T-cell (primary cell): ENCODE measurements at regions of chr12 and their contacts with region 1.

Region 1: DNA sequence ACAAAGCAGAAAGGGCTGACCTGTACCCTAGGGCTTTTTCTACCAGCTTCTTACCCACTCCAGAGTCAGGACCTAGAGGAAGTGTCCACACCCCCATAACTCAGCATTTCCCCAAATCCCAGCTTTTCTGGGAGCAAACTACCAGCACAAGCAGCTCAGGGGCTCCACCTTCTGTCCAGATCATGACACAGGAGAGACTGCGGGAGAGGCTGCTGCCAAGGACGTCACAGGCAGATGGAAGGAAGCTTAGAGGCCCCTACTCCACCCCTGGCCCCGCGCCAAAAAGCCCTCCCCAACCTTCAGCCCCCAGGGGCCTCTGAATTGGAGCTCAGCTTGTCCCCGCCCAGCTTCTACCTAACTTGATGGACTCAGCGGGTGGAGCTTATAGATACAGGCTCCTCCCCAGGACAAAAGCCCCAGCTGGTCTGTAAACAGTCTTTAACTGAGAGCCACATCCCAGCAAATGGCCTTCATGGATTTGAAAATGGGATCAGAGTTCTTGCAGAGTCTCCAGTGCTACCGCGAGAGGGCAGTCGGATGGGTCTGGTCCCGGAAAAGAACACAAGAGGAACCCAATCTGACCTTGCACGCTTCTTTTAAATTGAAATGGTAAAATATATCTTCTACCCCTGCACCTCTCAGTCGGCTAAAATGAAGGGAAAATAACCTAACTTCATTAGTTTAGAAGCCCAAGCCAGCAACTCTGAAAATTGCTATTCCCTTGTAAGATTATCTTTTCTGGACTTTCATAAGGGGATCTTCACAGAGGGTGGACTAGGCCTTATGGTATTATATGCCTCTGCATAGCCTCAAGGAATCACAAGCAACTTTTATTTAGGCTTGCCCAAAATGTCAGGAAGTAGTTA is 6.8 kb upstream of the BAZ2A start:
- DNase-seq: peak; percentile 73 to 99 (median 97)
- ATAC-seq: peak; percentile 62 to 79 (median 65)
- H3K4me3 ChIP-seq: peak overlapping the region; percentile 83 to 92
- H3K4me3 Mint-ChIP-seq: peak overlapping the region; percentile 89 to 100 (median 96)
- H3K27ac ChIP-seq: peak overlapping the region; percentile 90
- H3K27ac Mint-ChIP-seq: peak overlapping the region; percentile 94 to 98
- H3K4me1 ChIP-seq: peaks cover 32 to 55% of the 10 kb centered on the region in 2 experiments
- H3K4me1 Mint-ChIP-seq: peaks cover 48 to 55% (median 53%) of the 10 kb centered on the region in 3 donors
- H3K27me3 ChIP-seq: no peaks in the 10 kb centered on the region
- H3K27me3 Mint-ChIP-seq: no peaks in the 10 kb centered on the region

Region 2: GRCh38 chr12:56346703-56347102 is 290.2 kb before region 1 on chr12:
- CTCF ChIA-PET with region 1: no interaction called
- POLR2A ChIA-PET with region 1: no interaction called
- DNase-seq: peak in 2 of 35 experiments; percentile 21 to 30
- ATAC-seq: peak in 2 of 4 experiments; percentile 9 to 32
- H3K4me3 ChIP-seq: no peak overlapping the region
- H3K4me3 Mint-ChIP-seq: no peak overlapping the region
- H3K27ac ChIP-seq: no peak overlapping the region
- H3K27ac Mint-ChIP-seq: no peak overlapping the region
- H3K4me1 ChIP-seq: no peaks in the 10 kb centered on the region
- H3K4me1 Mint-ChIP-seq: no peaks in the 10 kb centered on the region
- H3K27me3 ChIP-seq: no peaks in the 10 kb centered on the region
- H3K27me3 Mint-ChIP-seq: no peaks in the 10 kb centered on the region

Region 3: DNA sequence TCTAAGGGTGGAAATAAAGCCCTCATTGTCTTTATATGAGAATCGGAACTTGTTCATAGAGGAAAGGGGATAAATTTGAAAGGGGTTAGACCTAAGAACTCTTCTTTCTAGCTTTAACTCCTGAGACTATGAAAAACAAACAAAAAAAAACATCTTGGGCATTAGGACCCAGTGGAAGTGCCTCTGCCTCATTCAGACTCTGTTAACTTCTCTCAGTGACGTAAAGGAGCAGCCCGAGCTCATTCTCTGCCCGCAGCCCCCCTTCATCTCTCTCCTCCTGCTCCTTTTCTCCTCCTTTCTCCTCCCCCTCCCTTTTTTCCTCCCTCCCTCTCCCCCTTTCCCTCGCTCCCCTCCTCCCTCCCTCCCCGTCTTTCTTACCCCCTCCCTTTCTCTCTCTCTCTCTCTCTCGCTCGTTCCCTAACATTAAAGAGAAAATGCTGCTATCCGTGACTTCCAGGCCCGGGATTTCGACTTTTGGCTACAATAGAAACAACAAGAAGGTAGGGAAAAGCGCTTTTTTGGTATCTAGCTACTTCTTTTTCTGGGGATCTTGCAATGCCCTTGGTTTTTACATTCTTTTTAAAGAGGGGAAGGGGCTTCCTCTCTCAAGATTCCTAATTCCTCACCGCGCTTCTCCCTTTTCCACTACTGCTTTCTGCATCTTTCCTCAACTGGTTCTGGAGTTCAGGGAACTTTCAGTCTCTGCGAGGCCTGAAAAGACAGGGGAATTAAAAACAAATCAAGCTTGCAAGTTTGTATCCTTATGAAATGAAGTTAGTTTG is 115.1 kb before region 1 on chr12 and contains the start of gene RBMS2:
- CTCF ChIA-PET with region 1: interaction called, 3 to 10 read pairs
- POLR2A ChIA-PET with region 1: interaction called, 3 to 9 read pairs
- DNase-seq: peak in 32 of 35 experiments; percentile 15 to 76 (median 35)
- ATAC-seq: peak; percentile 69 to 97 (median 83)
- H3K4me3 ChIP-seq: peak within 1 kb of the TSS; percentile 41 to 46
- H3K4me3 Mint-ChIP-seq: peak within 1 kb of the TSS; percentile 71 to 80 (median 76)
- H3K27ac ChIP-seq: peak within 1 kb of the TSS; percentile 51
- H3K27ac Mint-ChIP-seq: peak within 1 kb of the TSS; percentile 66 to 70
- H3K4me1 ChIP-seq: peaks cover 12 to 19% of the 10 kb centered on the region in 2 experiments
- H3K4me1 Mint-ChIP-seq: peaks cover 27 to 33% (median 31%) of the 10 kb centered on the region in 3 donors
- H3K27me3 ChIP-seq: no peaks in the 10 kb centered on the region
- H3K27me3 Mint-ChIP-seq: no peaks in the 10 kb centered on the region
- total RNA-seq, gene RBMS2: 0.99 to 8.3 (median 4.1) TPM

Region 4: GRCh38 chr12:56581418-56582145 is 55.3 kb before region 1 on chr12:
- CTCF ChIA-PET with region 1: no interaction called
- POLR2A ChIA-PET with region 1: interaction called in 1 of 2 experiments, 16 read pairs
- DNase-seq: peak in 11 of 35 experiments; percentile 8 to 54 (median 15)
- ATAC-seq: peak; percentile 91 to 98 (median 95)
- H3K4me3 ChIP-seq: no peak overlapping the region
- H3K4me3 Mint-ChIP-seq: peak overlapping the region in 1 of 3 donors; percentile 18
- H3K27ac ChIP-seq: peak overlapping the region; percentile 62
- H3K27ac Mint-ChIP-seq: peak overlapping the region; percentile 84 to 88
- H3K4me1 ChIP-seq: peaks cover 8 to 16% of the 10 kb centered on the region in 2 experiments
- H3K4me1 Mint-ChIP-seq: peaks cover 14 to 21% (median 20%) of the 10 kb centered on the region in 3 donors
- H3K27me3 ChIP-seq: no peaks in the 10 kb centered on the region
- H3K27me3 Mint-ChIP-seq: no peaks in the 10 kb centered on the region

Region 5: DNA sequence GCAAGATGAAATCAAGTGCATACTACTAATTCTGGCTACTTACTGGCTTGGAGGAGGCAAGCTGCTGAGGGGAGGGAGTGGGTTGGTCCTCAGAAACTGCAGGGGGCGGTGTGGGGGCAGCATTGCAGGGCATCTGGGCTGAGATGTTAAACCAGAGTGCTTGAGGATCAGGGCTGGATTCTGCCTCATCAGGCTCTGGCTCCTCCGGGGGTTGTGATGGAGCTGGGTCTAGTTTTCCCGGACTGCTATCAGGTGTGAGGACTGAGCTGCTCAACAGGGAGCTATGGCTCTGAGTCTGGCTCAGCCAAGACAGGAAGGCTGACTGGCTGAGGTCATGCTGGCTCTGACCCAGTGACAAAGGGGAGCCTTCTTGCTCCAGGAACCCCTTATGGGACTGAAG is 35.4 kb before region 1 on chr12:
- CTCF ChIA-PET with region 1: interaction called, 3 to 12 read pairs
- POLR2A ChIA-PET with region 1: no interaction called
- DNase-seq: peak in 27 of 35 experiments; percentile 7 to 48 (median 29)
- ATAC-seq: peak in 3 of 4 experiments; percentile 34 to 66 (median 62)
- H3K4me3 ChIP-seq: no peak overlapping the region
- H3K4me3 Mint-ChIP-seq: no peak overlapping the region
- H3K27ac ChIP-seq: no peak overlapping the region
- H3K27ac Mint-ChIP-seq: no peak overlapping the region
- H3K4me1 ChIP-seq: no peaks in the 10 kb centered on the region
- H3K4me1 Mint-ChIP-seq: no peaks in the 10 kb centered on the region
- H3K27me3 ChIP-seq: no peaks in the 10 kb centered on the region
- H3K27me3 Mint-ChIP-seq: no peaks in the 10 kb centered on the region

Region 6: DNA sequence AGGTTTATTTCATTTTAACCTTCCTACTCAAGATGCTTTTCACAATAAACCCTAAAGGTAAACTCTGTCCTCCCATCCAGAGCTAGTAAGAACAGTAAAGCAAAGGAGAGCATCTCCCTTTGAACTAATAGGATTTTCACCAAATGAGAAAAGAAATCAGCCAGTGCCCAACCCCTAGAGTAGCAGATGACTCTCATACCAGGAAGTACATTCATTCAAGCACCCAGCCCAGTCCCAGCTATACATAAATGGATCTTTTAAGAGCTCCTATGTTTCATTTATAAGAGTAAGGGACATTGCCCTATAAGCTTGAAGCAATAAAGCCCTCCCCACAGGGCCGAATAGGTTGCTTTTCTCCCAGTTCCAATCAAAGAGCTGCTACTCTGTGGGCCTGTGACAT is 14.4 kb before region 1 on chr12:
- CTCF ChIA-PET with region 1: interaction called, 7 to 27 read pairs
- POLR2A ChIA-PET with region 1: interaction called, 3 to 6 read pairs
- DNase-seq: no peak
- ATAC-seq: no peak
- H3K4me3 ChIP-seq: no peak overlapping the region
- H3K4me3 Mint-ChIP-seq: no peak overlapping the region
- H3K27ac ChIP-seq: no peak overlapping the region
- H3K27ac Mint-ChIP-seq: no peak overlapping the region
- H3K4me1 ChIP-seq: peaks cover 0 to 26% of the 10 kb centered on the region in 2 experiments
- H3K4me1 Mint-ChIP-seq: peaks cover 61 to 74% (median 71%) of the 10 kb centered on the region in 3 donors
- H3K27me3 ChIP-seq: no peaks in the 10 kb centered on the region
- H3K27me3 Mint-ChIP-seq: no peaks in the 10 kb centered on the region

Region 7: GRCh38 chr12:56688129-56688845 is 51.4 kb after region 1 on chr12 and contains the start of gene PTGES3:
- CTCF ChIA-PET with region 1: interaction called, 3 to 20 read pairs
- POLR2A ChIA-PET with region 1: interaction called, 6 read pairs
- DNase-seq: peak; percentile 92 to 99 (median 96)
- ATAC-seq: peak; percentile 75 to 85 (median 83)
- H3K4me3 ChIP-seq: peak within 1 kb of the TSS; percentile 75 to 91
- H3K4me3 Mint-ChIP-seq: peak within 1 kb of the TSS; percentile 99
- H3K27ac ChIP-seq: peak within 1 kb of the TSS; percentile 91
- H3K27ac Mint-ChIP-seq: peak within 1 kb of the TSS; percentile 98 to 100
- H3K4me1 ChIP-seq: peaks cover 13 to 39% of the 10 kb centered on the region in 2 experiments
- H3K4me1 Mint-ChIP-seq: peaks cover 23 to 48% (median 37%) of the 10 kb centered on the region in 3 donors
- H3K27me3 ChIP-seq: no peaks in the 10 kb centered on the region
- H3K27me3 Mint-ChIP-seq: no peaks in the 10 kb centered on the region
- total RNA-seq, gene PTGES3: 121 to 155 (median 145) TPM